Activated B cell treated with CpG ODN at 0.5 μM for 24 hours (primary cell): ENCODE measurements at regions of chr2 and their contacts with region 1.

Region 1: GRCh38 chr2:165573534-165574461 is 104.3 kb downstream of the CSRNP3 start:
- DNase-seq: no peak
- ATAC-seq: no peak
- H3K4me3 Mint-ChIP-seq: peak overlapping the region; percentile 28
- H3K27ac Mint-ChIP-seq: no peak overlapping the region
- H3K4me1 Mint-ChIP-seq: peaks cover 4% of the 10 kb centered on the region
- H3K27me3 Mint-ChIP-seq: peaks cover 6% of the 10 kb centered on the region
- CTCF ChIP-seq: no peak

Region 2: GRCh38 chr2:165587335-165587938 is 13.6 kb after region 1 on chr2:
- CTCF ChIA-PET with region 1: no interaction called
- POLR2A ChIA-PET with region 1: no interaction called
- intact Hi-C with region 1: no loop called
- DNase-seq: no peak
- ATAC-seq: peak; percentile 68
- H3K4me3 Mint-ChIP-seq: peak overlapping the region; percentile 57
- H3K27ac Mint-ChIP-seq: peak overlapping the region; percentile 50
- H3K4me1 Mint-ChIP-seq: peaks cover 20% of the 10 kb centered on the region
- H3K27me3 Mint-ChIP-seq: no peaks in the 10 kb centered on the region
- CTCF ChIP-seq: no peak

Region 3: DNA sequence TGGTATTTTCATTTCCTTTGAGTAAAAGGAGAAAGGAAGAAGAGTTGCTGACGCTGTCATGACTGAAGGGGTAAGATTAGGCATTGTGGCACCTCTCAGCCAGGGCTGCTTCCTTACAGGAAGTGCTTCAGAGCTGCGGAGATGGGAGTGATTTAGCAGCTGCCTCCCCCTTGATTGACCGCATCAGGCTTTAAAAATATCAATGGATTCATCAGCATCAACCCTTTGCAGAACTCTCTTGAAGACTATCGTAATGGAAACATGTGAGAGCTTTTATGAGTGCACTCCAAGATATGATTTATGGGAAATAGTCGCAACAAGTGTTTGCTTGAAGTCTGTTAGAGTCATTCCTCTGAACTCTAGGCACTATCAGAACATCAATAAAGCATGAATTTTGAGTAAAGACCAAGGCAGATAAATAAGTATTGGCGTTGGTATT is 36.8 kb after region 1 on chr2:
- CTCF ChIA-PET with region 1: no interaction called
- POLR2A ChIA-PET with region 1: no interaction called
- intact Hi-C with region 1: loop called (anchors 5 kb)
- DNase-seq: no peak
- ATAC-seq: no peak
- H3K4me3 Mint-ChIP-seq: no peak overlapping the region
- H3K27ac Mint-ChIP-seq: no peak overlapping the region
- H3K4me1 Mint-ChIP-seq: peaks cover 8% of the 10 kb centered on the region
- H3K27me3 Mint-ChIP-seq: no peaks in the 10 kb centered on the region
- CTCF ChIP-seq: no peak